ENCODE measurements at regions of chr2 and their contacts with region 1.

Region 1: DNA sequence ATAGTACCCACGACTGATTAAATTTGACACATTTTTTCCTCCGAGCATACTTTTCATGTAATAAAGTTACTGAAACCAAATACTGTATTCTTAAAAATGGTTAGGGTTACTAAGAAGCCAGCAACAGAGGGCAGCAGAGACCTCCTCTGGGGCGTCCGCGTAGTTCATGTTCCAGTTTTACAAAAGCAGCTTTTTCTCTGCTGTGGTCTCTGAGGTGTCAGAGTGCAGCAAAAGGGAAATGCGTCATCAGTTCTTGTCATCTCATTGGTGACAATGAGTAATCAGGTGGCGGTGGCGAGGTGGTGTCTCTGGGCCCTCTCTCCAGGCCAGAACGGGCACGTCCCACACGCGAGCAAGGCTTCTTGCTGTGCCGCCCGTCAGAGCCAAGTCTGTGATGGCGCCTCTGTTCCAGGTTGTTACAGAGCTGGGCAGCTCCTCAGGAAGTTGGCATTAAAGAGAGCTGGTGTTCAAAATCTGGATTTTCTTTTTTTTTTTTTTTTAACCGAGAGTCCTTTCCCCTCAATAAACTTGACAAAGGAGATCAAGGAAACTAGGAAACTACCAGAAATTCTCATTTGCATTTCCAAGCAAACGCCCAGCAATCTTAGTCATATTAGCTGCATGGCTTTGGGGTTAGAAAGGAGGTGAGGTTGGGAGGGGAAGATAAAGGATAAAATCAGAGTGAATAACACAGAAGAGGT is 98.6 kb upstream of the BZW1 start:
- DNase-seq: peak; percentile 95
- ATAC-seq: peak; percentile 98
- H3K4me3 ChIP-seq: peak overlapping the region; percentile 23
- H3K27ac ChIP-seq: peak overlapping the region; percentile 33
- H3K4me1 ChIP-seq: peaks cover 4% of the 10 kb centered on the region
- H3K27me3 ChIP-seq: peaks cover under 1% of the 10 kb centered on the region; the same call in 1 of the 2 replicates
- CTCF ChIP-seq: peak; percentile 94
- POLR2A ChIP-seq: peak; percentile 70; the same call in 1 of the 2 replicates
- RAD21 ChIP-seq: peak; percentile 96

Region 2: GRCh38 chr2:200728630-200729029 is 15.5 kb after region 1 on chr2:
- CTCF ChIA-PET with region 1: interaction called, 12 read pairs
- POLR2A ChIA-PET with region 1: no interaction called
- dilution Hi-C with region 1: no loop called
- in situ Hi-C with region 1: no loop called
- intact Hi-C with region 1: no loop called
- DNase-seq: peak; percentile 34
- ATAC-seq: no peak
- H3K4me3 ChIP-seq: no peak overlapping the region
- H3K27ac ChIP-seq: no peak overlapping the region
- H3K4me1 ChIP-seq: no peaks in the 10 kb centered on the region
- H3K27me3 ChIP-seq: peaks cover 44% of the 10 kb centered on the region
- CTCF ChIP-seq: no peak
- POLR2A ChIP-seq: no peak
- RAD21 ChIP-seq: no peak

Region 3: DNA sequence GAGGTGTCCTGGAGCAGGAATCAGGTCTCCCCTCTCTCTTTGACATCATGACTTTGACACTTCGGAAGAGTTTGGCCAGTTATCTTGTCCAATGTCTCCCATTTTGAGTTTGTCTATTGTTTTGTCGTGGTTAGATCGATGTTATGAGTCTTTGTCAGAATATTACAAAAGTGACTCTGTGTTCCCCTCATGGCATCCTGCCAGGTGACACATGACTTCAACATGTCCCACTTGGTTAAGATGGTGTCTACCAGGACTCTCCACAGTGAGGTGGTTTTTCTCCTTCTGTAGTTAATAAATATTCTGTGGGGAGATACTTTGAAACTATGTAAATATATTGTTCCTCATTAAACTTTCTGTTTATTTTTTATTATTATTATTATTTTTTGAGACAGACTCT is 21.9 kb after region 1 on chr2:
- CTCF ChIA-PET with region 1: interaction called, 7 read pairs
- POLR2A ChIA-PET with region 1: no interaction called
- dilution Hi-C with region 1: no loop called
- in situ Hi-C with region 1: no loop called
- intact Hi-C with region 1: loop called (anchors 1 kb)
- DNase-seq: no peak
- ATAC-seq: no peak
- H3K4me3 ChIP-seq: no peak overlapping the region
- H3K27ac ChIP-seq: no peak overlapping the region
- H3K4me1 ChIP-seq: peaks cover 5% of the 10 kb centered on the region
- H3K27me3 ChIP-seq: 0 out of 2 replicates have a peak, but pooled peaks cover 2% of the 10 kb centered on the region
- CTCF ChIP-seq: no peak
- POLR2A ChIP-seq: no peak
- RAD21 ChIP-seq: no peak

Region 4: DNA sequence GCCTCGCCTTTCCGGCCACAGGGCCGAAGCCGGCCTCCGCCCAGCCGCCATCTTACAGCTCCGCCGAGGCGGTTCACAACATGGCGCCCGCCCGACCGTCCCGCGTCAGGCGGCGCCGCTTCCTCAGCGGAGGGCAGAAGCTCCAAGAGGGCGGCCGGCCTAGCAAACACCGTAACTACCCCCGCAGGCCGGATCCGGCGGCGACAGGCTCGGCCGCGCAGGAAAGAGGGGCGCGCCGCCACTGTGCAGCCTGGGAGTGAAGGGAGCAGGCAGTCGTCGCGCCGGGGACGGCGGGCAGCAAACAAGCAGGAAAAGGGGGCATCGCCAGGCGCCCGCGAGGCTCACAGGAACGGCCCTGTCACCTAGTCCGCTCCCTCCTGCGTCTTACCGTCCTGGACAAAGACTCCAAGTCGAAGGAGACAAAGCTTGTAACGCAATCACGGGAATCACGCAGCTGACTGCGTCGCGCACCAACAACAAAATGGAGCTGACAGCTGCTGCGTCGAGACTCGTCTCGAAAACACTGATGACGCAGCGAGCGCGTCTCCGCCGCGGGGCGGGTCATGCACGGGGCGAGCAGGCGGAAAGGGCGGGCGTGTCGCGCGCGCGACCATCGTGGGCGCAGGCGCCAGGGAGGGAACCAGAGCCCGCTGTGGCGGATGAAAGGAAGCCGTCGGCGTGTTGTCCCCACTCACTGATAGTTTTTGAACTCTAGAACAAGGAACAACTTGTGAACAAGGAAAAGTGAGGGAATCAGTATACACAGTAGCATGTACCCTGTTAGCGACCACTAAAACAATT is 151.2 kb after region 1 on chr2 and contains the start of gene CLK1:
- CTCF ChIA-PET with region 1: no interaction called
- POLR2A ChIA-PET with region 1: no interaction called
- dilution Hi-C with region 1: no loop called
- in situ Hi-C with region 1: no loop called
- intact Hi-C with region 1: loop called (anchors 1 kb)
- DNase-seq: peak; percentile 93
- ATAC-seq: peak; percentile 89
- H3K4me3 ChIP-seq: peak within 1 kb of the TSS; percentile 60
- H3K27ac ChIP-seq: peak within 1 kb of the TSS; percentile 88
- H3K4me1 ChIP-seq: peaks cover 5% of the 10 kb centered on the region
- H3K27me3 ChIP-seq: no peaks in the 10 kb centered on the region
- CTCF ChIP-seq: no peak
- POLR2A ChIP-seq: peak; percentile 99
- RAD21 ChIP-seq: no peak
- total RNA-seq, gene CLK1: 26.2 and 43.9 TPM in 2 replicates

Region 5: DNA sequence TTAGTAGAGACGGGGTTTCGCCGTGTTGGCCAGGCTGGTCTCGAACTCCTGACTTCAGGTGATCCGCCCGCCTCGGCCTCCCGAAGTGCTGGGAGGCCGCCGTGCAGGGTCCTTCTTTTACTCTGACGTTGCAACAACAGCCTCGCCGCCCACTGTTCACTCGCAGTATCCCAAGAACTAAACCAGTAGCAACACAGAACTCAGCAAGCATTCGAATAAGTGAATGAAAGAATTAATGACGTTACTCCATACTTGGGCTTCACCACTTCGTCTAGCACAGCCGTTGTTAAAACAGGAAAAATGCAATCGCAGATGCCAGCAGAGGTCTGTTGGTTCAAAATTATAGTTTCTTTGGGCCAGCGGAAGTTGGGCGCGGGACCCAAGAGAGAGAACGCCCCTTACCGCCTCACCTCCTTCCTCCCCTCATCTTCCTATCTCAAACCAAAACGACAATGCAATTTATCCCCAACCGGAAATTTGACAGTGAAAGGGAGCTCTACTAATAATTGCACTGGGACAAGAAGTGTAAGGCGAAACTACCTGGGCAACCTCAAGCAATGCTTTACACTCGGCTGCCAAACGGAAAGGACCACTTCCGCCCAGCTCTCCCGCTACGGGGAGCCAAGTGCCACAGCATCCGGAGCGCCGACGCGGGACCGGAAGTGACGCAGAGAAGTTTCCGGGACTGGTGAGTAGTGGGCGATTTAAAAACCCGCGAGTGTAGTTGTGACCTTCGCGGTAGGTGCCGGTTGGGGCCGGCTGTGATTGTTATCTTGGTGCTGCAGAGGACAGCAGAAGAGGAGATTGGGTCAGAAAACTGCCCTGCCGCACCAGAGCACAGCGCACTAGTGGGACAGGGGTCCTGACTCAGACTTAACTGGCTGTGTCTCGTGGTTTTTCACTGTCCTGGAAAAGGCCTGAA is 175.8 kb after region 1 on chr2 and contains the starts of genes NIF3L1 and PPIL3:
- CTCF ChIA-PET with region 1: no interaction called
- POLR2A ChIA-PET with region 1: no interaction called
- dilution Hi-C with region 1: no loop called
- in situ Hi-C with region 1: no loop called
- intact Hi-C with region 1: loop called (anchors 2 kb)
- DNase-seq: peak; percentile 98
- ATAC-seq: peak; percentile 81
- H3K4me3 ChIP-seq: peak within 1 kb of the TSS; percentile 72
- H3K27ac ChIP-seq: peak within 1 kb of the TSS; percentile 75
- H3K4me1 ChIP-seq: peaks cover 2% of the 10 kb centered on the region; the same call in 1 of the 2 replicates
- H3K27me3 ChIP-seq: no peaks in the 10 kb centered on the region
- CTCF ChIP-seq: no peak
- POLR2A ChIP-seq: peak; percentile 81
- RAD21 ChIP-seq: no peak
- total RNA-seq, gene NIF3L1: 31.1 and 43.0 TPM in 2 replicates
- total RNA-seq, gene PPIL3: 35.1 and 49.2 TPM in 2 replicates

Region 6: DNA sequence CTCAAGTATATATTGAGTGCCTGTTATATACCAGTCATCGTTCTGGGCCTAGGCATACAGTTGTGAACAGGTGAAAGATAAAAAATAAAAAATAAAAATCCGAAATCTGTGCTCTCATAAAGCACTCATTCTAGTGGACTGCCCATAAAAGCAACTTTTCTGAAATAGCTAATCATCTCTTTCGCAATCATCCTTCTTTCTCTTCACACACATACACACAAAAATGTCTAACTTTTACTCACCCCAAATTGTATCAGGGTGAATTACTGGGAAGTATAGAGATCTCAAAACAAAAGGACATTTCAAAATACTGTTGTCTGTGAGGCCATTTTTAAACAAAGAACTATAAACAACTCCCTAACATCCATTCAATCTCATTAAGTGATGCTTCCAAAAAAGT is 279.9 kb after region 1 on chr2:
- CTCF ChIA-PET with region 1: no interaction called
- POLR2A ChIA-PET with region 1: no interaction called
- dilution Hi-C with region 1: no loop called
- in situ Hi-C with region 1: no loop called
- intact Hi-C with region 1: no loop called
- DNase-seq: peak; percentile 34
- ATAC-seq: peak; percentile 46
- H3K4me3 ChIP-seq: no peak overlapping the region
- H3K27ac ChIP-seq: no peak overlapping the region
- H3K4me1 ChIP-seq: peaks cover 2% of the 10 kb centered on the region; the same call in 1 of the 2 replicates
- H3K27me3 ChIP-seq: no peaks in the 10 kb centered on the region
- CTCF ChIP-seq: no peak
- POLR2A ChIP-seq: no peak
- RAD21 ChIP-seq: no peak

Measured in IMR-90 (cell line).